G401 (cell line): ENCODE measurements at regions of chr12 and their contacts with region 1.

Region 1: DNA sequence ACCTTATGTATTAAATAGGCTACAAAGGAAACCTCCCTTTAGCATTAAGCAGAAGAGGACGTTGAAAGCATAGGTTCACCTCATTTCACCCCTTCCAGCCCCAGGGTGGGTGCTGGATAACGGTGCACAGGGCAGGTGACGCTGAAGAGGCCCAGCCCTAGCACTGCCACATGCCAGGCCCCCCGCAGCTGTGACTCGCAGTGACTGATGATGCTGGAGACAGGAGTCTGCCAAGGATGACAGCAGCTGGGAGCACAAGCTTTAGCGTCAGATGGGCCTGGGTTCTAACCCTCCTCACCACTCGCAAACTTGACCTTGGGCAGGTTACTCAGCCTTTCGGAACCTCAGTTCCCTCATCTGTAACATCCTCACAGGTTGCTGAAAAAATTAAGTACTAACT is 76.7 kb downstream of the TBK1 start:
- DNase-seq: no peak

Region 2: GRCh38 chr12:64560396-64561304 is 32.0 kb after region 1 on chr12:
- in situ Hi-C with region 1: no loop called
- DNase-seq: no peak

Region 3: GRCh38 chr12:64679487-64679983 is 150.9 kb after region 1 on chr12:
- in situ Hi-C with region 1: loop called (anchors 25 kb)
- DNase-seq: peak; percentile 57

Region 4: GRCh38 chr12:64744422-64745258 is 216.0 kb after region 1 on chr12:
- in situ Hi-C with region 1: no loop called
- DNase-seq: no peak